GM12878 (cell line): ENCODE measurements at regions of chr4 and their contacts with region 1.

Region 1: GRCh38 chr4:87093443-87094123 is 126.8 kb downstream of the KLHL8 start:
- DNase-seq: peak; percentile 43
- ATAC-seq: peak; percentile 93
- H3K4me3 ChIP-seq: no peak overlapping the region
- H3K27ac ChIP-seq: peak overlapping the region; percentile 13; the same call in 1 of the 2 replicates
- H3K4me1 ChIP-seq: peaks cover 16% of the 10 kb centered on the region
- H3K27me3 ChIP-seq: no peaks in the 10 kb centered on the region
- CTCF ChIP-seq: peak; percentile 62 to 78 (median 64)
- EP300 ChIP-seq: 0 out of 4 replicates have a peak, but pooled peaks of 1 of the 2 experiments have one; percentile 9
- POLR2A ChIP-seq: no peak
- RAD21 ChIP-seq: peak; percentile 85

Region 2: GRCh38 chr4:86791126-86791525 is 302.5 kb before region 1 on chr4:
- CTCF ChIA-PET with region 1: no interaction called
- POLR2A ChIA-PET with region 1: no interaction called
- RAD21 ChIA-PET with region 1: no interaction called
- SMC1A ChIA-PET with region 1: no interaction called
- in situ Hi-C with region 1: no loop called
- intact Hi-C with region 1: no loop called
- DNase-seq: no peak
- ATAC-seq: no peak
- H3K4me3 ChIP-seq: no peak overlapping the region
- H3K27ac ChIP-seq: no peak overlapping the region
- H3K4me1 ChIP-seq: no peaks in the 10 kb centered on the region
- H3K27me3 ChIP-seq: no peaks in the 10 kb centered on the region
- CTCF ChIP-seq: no peak
- EP300 ChIP-seq: no peak
- POLR2A ChIP-seq: no peak
- RAD21 ChIP-seq: no peak

Region 3: GRCh38 chr4:86934771-86935565 is 158.6 kb before region 1 on chr4 and contains the start of gene AFF1:
- CTCF ChIA-PET with region 1: interaction called, 92 read pairs
- POLR2A ChIA-PET with region 1: interaction called, 12 read pairs
- RAD21 ChIA-PET with region 1: interaction called, 114 read pairs
- SMC1A ChIA-PET with region 1: interaction called, 121 read pairs
- in situ Hi-C with region 1: no loop called
- intact Hi-C with region 1: loop called (anchors 1 kb)
- DNase-seq: peak; percentile 71
- ATAC-seq: peak; percentile 72
- H3K4me3 ChIP-seq: peak within 1 kb of the TSS; percentile 91
- H3K27ac ChIP-seq: peak within 1 kb of the TSS; percentile 93
- H3K4me1 ChIP-seq: peaks cover 3% of the 10 kb centered on the region; the same call in 1 of the 2 replicates
- H3K27me3 ChIP-seq: no peaks in the 10 kb centered on the region
- CTCF ChIP-seq: peak in 2 of 3 experiments; percentile 30 to 32; a peak in 4 of 6 replicates
- EP300 ChIP-seq: no peak
- POLR2A ChIP-seq: peak; percentile 96
- RAD21 ChIP-seq: peak; percentile 17; the same call in 1 of the 2 replicates
- polyA plus RNA-seq, gene AFF1: 3.5 to 11.4 TPM

Region 4: DNA sequence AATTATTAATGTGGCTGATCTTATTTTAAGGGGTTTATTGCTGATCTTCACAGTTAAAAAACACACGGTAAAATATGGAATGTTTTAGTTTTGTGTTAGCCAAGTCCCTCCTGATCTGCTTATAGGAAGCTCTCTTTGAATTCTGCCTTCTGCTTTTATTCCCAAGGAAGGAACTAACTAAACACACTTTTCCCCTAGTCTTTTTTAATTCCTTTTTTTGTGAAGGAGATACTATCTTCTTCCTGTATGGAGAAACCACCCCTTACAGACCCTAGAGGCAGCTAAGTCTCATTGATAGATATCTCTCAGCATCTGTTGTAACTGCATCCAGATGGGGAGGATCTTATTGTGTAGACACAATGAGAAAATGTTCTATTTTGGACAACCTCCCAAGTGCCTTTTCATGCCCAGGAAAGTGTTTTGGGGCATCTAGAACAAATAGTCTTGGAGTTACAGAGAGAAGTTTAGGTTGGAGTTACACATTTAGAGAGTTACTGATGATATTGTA is 94.4 kb before region 1 on chr4:
- CTCF ChIA-PET with region 1: interaction called, 70 read pairs
- POLR2A ChIA-PET with region 1: no interaction called
- RAD21 ChIA-PET with region 1: interaction called, 68 read pairs
- SMC1A ChIA-PET with region 1: interaction called, 23 read pairs
- in situ Hi-C with region 1: no loop called
- intact Hi-C with region 1: no loop called
- DNase-seq: no peak
- ATAC-seq: no peak
- H3K4me3 ChIP-seq: no peak overlapping the region
- H3K27ac ChIP-seq: no peak overlapping the region; the same call in 1 of the 2 replicates
- H3K4me1 ChIP-seq: peaks cover 29% of the 10 kb centered on the region
- H3K27me3 ChIP-seq: no peaks in the 10 kb centered on the region
- CTCF ChIP-seq: no peak
- EP300 ChIP-seq: no peak
- POLR2A ChIP-seq: no peak
- RAD21 ChIP-seq: no peak

Region 5: GRCh38 chr4:87038837-87039615 is 54.6 kb before region 1 on chr4:
- CTCF ChIA-PET with region 1: interaction called, 10 read pairs
- POLR2A ChIA-PET with region 1: interaction called, 6 read pairs
- RAD21 ChIA-PET with region 1: interaction called, 6 read pairs
- SMC1A ChIA-PET with region 1: interaction called, 10 read pairs
- in situ Hi-C with region 1: no loop called
- intact Hi-C with region 1: no loop called
- DNase-seq: no peak
- ATAC-seq: peak; percentile 83
- H3K4me3 ChIP-seq: peak overlapping the region; percentile 5; the same call in 1 of the 2 replicates
- H3K27ac ChIP-seq: peak overlapping the region; percentile 3
- H3K4me1 ChIP-seq: peaks cover 52% of the 10 kb centered on the region
- H3K27me3 ChIP-seq: no peaks in the 10 kb centered on the region
- CTCF ChIP-seq: no peak
- EP300 ChIP-seq: no peak
- POLR2A ChIP-seq: no peak
- RAD21 ChIP-seq: no peak

Region 6: GRCh38 chr4:87073199-87074120 is 20.1 kb before region 1 on chr4:
- CTCF ChIA-PET with region 1: interaction called, 14 read pairs
- POLR2A ChIA-PET with region 1: interaction called, 7 read pairs
- RAD21 ChIA-PET with region 1: interaction called, 33 read pairs
- SMC1A ChIA-PET with region 1: interaction called, 39 read pairs
- in situ Hi-C with region 1: no loop called
- intact Hi-C with region 1: loop called (anchors 2 kb)
- DNase-seq: peak; percentile 93
- ATAC-seq: peak; percentile 93
- H3K4me3 ChIP-seq: peak overlapping the region; percentile 65; the same call in 1 of the 2 replicates
- H3K27ac ChIP-seq: peak overlapping the region; percentile 98
- H3K4me1 ChIP-seq: peaks cover 17% of the 10 kb centered on the region
- H3K27me3 ChIP-seq: no peaks in the 10 kb centered on the region
- CTCF ChIP-seq: no peak
- EP300 ChIP-seq: peak; percentile 65 to 67; a peak in 3 of 4 replicates
- POLR2A ChIP-seq: peak; percentile 62
- RAD21 ChIP-seq: no peak

Region 7: DNA sequence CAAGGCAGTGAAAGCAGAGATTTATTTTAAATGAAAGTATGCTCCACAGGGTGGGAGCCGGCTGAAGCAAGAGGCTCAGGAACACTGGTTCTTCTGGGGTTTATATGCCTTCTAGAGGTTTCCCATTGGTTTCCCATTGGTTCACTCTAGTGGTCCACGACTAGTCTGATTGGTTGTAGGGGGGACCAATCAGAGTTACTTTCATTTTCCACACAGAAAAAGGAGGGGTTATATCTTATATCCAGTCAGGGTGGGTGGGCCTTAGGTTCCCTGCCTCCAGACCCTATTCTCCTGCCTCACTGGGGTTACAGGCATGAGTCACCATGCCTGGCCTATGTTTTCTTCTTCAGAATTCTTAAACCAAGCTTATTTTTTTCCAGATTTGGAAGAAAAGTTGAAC is 25.2 kb after region 1 on chr4:
- CTCF ChIA-PET with region 1: interaction called, 4 read pairs
- POLR2A ChIA-PET with region 1: no interaction called
- RAD21 ChIA-PET with region 1: interaction called, 3 read pairs
- SMC1A ChIA-PET with region 1: interaction called, 19 read pairs
- in situ Hi-C with region 1: no loop called
- intact Hi-C with region 1: no loop called
- DNase-seq: no peak
- ATAC-seq: peak; percentile 73
- H3K4me3 ChIP-seq: no peak overlapping the region
- H3K27ac ChIP-seq: no peak overlapping the region
- H3K4me1 ChIP-seq: no peaks in the 10 kb centered on the region; the same call in 1 of the 2 replicates
- H3K27me3 ChIP-seq: no peaks in the 10 kb centered on the region
- CTCF ChIP-seq: no peak
- EP300 ChIP-seq: no peak
- POLR2A ChIP-seq: no peak
- RAD21 ChIP-seq: no peak